ENCODE measurements at regions of chr6 and their contacts with region 1.

Region 1: DNA sequence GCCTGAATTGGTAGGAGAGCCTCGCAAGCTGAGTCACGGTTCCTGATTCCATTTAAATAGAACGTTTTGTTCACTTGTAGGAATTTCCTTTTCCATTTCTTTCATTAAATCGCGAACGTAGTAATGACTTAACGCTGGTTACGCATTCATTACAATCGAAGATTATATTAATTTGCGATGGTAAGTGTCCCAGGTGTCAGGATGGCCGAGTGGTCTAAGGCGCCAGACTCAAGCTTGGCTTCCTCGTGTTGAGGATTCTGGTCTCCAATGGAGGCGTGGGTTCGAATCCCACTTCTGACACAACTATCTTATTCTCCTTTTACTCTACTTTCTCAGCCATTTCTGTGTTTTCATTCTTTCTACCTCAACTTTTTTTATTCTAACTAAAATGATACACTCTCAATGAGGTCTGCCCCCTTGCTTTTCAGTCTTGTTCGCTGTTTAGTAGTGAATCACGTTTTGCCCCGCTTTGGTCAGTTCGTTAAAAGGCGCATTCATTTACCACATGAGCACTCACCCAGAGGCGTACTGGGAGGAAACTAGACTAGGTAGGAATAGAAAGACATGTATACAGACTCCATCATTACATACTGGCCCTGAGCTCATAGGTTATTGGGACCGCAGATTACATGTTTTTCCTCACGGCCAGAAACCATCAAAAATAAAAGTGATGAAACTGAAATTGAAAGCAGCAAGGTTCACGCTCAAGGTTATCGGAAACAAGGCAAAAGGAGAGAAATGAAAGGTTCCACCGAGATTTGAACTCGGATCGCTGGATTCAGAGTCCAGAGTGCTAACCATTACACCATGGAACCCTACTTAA is 17.3 kb upstream of the TRIM27 start:
- DNase-seq: peak; percentile 74
- H3K4me3 ChIP-seq: peak overlapping the region; percentile 48 to 49
- H3K27ac ChIP-seq: peak overlapping the region; percentile 79 to 80
- H3K4me1 ChIP-seq: no peaks in the 10 kb centered on the region
- H3K27me3 ChIP-seq: no peaks in the 10 kb centered on the region
- CTCF ChIP-seq: no peak
- POLR2A ChIP-seq: no peak

Region 2: DNA sequence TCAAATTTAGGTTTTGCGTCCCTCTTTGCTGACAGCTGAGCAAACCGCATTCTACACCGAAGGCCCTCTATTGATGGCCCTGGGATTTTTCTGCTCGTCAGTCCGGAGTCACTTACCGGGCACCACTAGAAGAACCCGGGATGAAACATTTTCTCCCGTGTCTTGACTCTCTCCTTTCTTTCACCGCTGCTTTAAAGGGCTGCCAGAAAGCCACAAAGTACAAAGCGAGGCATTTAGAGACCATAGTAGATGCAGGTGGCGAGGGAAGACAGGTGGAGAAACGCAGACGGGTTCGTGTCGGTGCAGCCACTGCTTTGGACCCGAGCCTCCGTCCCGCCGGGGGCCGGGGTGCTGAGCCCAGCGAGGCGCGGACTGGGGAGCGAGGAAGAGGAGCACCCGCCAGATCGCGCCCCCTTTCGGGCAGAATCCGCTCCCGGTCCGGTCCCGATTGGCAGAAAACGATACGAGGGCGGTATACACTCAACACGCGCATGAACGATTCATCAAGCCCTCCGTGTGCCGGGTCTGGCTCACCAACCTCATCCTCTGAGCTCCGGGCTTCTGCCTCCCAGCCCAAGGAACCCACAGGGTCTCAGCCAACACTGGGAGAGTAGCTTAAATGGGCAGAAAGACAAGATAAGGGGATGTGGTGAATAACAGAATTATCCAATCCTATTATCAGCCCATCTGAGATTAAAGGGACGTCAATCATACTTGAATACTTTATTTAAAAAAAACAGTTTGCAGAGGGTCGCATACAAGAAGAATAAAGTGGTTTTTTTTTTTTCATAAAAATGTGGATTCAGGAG is 102.2 kb before region 1 on chr6:
- intact Hi-C with region 1: loop called (anchors 5 kb)
- DNase-seq: peak; percentile 83
- H3K4me3 ChIP-seq: peak overlapping the region; percentile 53 to 58
- H3K27ac ChIP-seq: peak overlapping the region; percentile 80 to 81
- H3K4me1 ChIP-seq: no peaks in the 10 kb centered on the region
- H3K27me3 ChIP-seq: peaks cover 3% of the 10 kb centered on the region
- CTCF ChIP-seq: peak; percentile 45 to 64 (median 52)
- POLR2A ChIP-seq: no peak

Region 3: GRCh38 chr6:28865401-28866204 is 75.5 kb before region 1 on chr6:
- intact Hi-C with region 1: no loop called
- DNase-seq: no peak
- H3K4me3 ChIP-seq: peak overlapping the region in 1 of 2 donors; percentile 61
- H3K27ac ChIP-seq: peak overlapping the region in 1 of 2 donors; percentile 85
- H3K4me1 ChIP-seq: no peaks in the 10 kb centered on the region
- H3K27me3 ChIP-seq: no peaks in the 10 kb centered on the region
- CTCF ChIP-seq: no peak
- POLR2A ChIP-seq: no peak

Region 4: GRCh38 chr6:28895134-28895812 is 45.8 kb before region 1 on chr6:
- intact Hi-C with region 1: loop called (anchors 2 kb)
- DNase-seq: peak; percentile 93
- H3K4me3 ChIP-seq: peak overlapping the region; percentile 53 to 55
- H3K27ac ChIP-seq: peak overlapping the region; percentile 94 to 99
- H3K4me1 ChIP-seq: no peaks in the 10 kb centered on the region
- H3K27me3 ChIP-seq: no peaks in the 10 kb centered on the region
- CTCF ChIP-seq: peak in 1 of 4 experiments; percentile 4
- POLR2A ChIP-seq: peak; percentile 70

Region 5: DNA sequence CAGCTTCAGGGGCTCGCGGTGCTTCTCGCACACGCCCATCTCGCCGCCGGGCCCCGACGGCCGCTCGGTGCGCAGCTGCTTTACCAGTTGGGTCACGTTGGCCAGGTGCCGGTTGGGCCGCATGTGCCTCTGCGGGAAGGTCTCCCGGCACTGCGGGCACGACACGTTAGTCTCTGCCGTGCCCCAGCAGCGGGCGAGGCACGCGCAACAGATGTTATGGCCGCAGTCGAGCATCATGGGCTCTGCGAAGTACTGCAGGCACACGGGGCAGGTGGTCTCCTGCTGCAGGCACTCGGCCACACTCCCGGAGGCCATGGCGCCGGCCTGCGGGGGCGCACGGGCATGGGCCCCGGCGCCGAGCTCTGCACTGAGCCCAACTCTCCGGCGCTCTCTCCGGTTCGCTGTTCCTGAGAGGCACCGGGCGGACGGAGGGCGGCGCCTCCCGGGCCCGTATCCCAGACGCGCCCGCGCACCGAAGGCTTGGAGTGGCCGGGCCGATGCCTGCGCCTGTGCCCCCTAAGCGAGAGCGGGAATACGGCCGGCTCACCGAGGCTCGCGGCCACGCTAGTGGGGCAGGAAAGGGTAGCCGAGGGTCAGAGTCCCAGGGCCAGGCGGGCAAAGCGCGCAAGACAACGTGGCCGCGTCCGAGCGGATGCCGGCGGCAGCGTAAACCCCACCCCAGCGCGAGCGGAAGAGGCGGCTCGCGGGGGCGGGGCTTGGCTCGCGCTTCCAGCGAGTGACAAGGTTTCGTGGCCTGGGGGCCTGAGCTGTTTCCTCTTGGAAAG is 17.6 kb before region 1 on chr6 and contains the start of gene TRIM27:
- intact Hi-C with region 1: loop called (anchors 2 kb)
- DNase-seq: peak; percentile 91
- H3K4me3 ChIP-seq: peak within 1 kb of the TSS; percentile 56 to 80
- H3K27ac ChIP-seq: peak within 1 kb of the TSS; percentile 93
- H3K4me1 ChIP-seq: no peaks in the 10 kb centered on the region
- H3K27me3 ChIP-seq: no peaks in the 10 kb centered on the region
- CTCF ChIP-seq: no peak
- POLR2A ChIP-seq: peak; percentile 85
- total RNA-seq, gene TRIM27: 79.2 to 85.7 TPM

Measured in prostate gland (tissue), 2 donors.